ENCODE measurements at regions of chr16 and their contacts with region 1.

Region 1: GRCh38 chr16:56789360-56789759 is 59.4 kb downstream of the NUP93 start:
- DNase-seq: peak; percentile 71
- ATAC-seq: peak; percentile 72
- H3K4me3 Mint-ChIP-seq: no peak overlapping the region
- H3K27ac Mint-ChIP-seq: no peak overlapping the region
- H3K4me1 Mint-ChIP-seq: peaks cover 4% of the 10 kb centered on the region
- H3K27me3 Mint-ChIP-seq: no peaks in the 10 kb centered on the region

Region 2: GRCh38 chr16:56860226-56861020 is 71.1 kb after region 1 on chr16:
- CTCF ChIA-PET with region 1: interaction called, 14 read pairs
- DNase-seq: peak; percentile 88
- ATAC-seq: peak; percentile 83
- H3K4me3 Mint-ChIP-seq: peak overlapping the region; percentile 57
- H3K27ac Mint-ChIP-seq: peak overlapping the region; percentile 93
- H3K4me1 Mint-ChIP-seq: peaks cover 56% of the 10 kb centered on the region
- H3K27me3 Mint-ChIP-seq: peaks cover 2% of the 10 kb centered on the region

Region 3: GRCh38 chr16:56950881-56951771 is 161.8 kb after region 1 on chr16:
- CTCF ChIA-PET with region 1: interaction called, 25 read pairs
- DNase-seq: peak; percentile 79
- ATAC-seq: peak; percentile 89
- H3K4me3 Mint-ChIP-seq: no peak overlapping the region
- H3K27ac Mint-ChIP-seq: peak overlapping the region; percentile 51
- H3K4me1 Mint-ChIP-seq: peaks cover 24% of the 10 kb centered on the region
- H3K27me3 Mint-ChIP-seq: peaks cover 3% of the 10 kb centered on the region

Measured in activated CD8-positive, alpha-beta memory T cell treated with anti-CD3 and anti-CD28 coated beads, Interleukin-2, amount 10 ng/mL, durations not matched to agents 7 days and 5 days (primary cell).